Heart right ventricle (tissue), 16 donors: ENCODE measurements at regions of chr12 and their contacts with region 1.

Region 1: GRCh38 chr12:79174626-79175025 is 310.1 kb downstream of the SYT1 start:
- DNase-seq: no peak
- ATAC-seq: peak in 5 of 8 donors; percentile 31 to 68 (median 42)
- H3K4me3 ChIP-seq: no peak overlapping the region
- H3K27ac ChIP-seq: no peak overlapping the region
- H3K4me1 ChIP-seq: no peaks in the 10 kb centered on the region
- H3K27me3 ChIP-seq: no peaks in the 10 kb centered on the region
- CTCF ChIP-seq: peak in 6 of 9 donors; percentile 31 to 52 (median 34)

Region 2: GRCh38 chr12:78002878-78003277 is 1171.7 kb before region 1 on chr12:
- intact Hi-C with region 1: loop called in 1 of 10 experiments (anchors 10 kb)
- DNase-seq: no peak
- ATAC-seq: no peak
- H3K4me3 ChIP-seq: no peak overlapping the region
- H3K27ac ChIP-seq: no peak overlapping the region
- H3K4me1 ChIP-seq: peaks cover 0 to 13% (median 0%) of the 10 kb centered on the region in 9 donors
- H3K27me3 ChIP-seq: no peaks in the 10 kb centered on the region
- CTCF ChIP-seq: peak in 1 of 9 donors; percentile 12

Region 3: GRCh38 chr12:78146365-78146772 is 1028.3 kb before region 1 on chr12:
- intact Hi-C with region 1: loop called in 1 of 10 experiments (anchors 10 kb)
- DNase-seq: no peak
- ATAC-seq: no peak
- H3K4me3 ChIP-seq: no peak overlapping the region
- H3K27ac ChIP-seq: no peak overlapping the region
- H3K4me1 ChIP-seq: peaks cover 0 to 20% (median 0%) of the 10 kb centered on the region in 9 donors
- H3K27me3 ChIP-seq: no peaks in the 10 kb centered on the region
- CTCF ChIP-seq: peak; percentile 48 to 86 (median 77)